ENCODE measurements at regions of chr2 and their contacts with region 1.

Region 1: GRCh38 chr2:143710196-143710595 is 581.0 kb downstream of the ARHGAP15 start:
- DNase-seq: no peak
- H3K4me3 ChIP-seq: no peak overlapping the region
- H3K27ac ChIP-seq: no peak overlapping the region
- H3K4me1 ChIP-seq: peaks cover 0 to 3% (median 0%) of the 10 kb centered on the region in 4 donors
- H3K27me3 ChIP-seq: no peaks in the 10 kb centered on the region
- CTCF ChIP-seq: no peak
- EP300 ChIP-seq: no peak
- POLR2A ChIP-seq: no peak

Region 2: DNA sequence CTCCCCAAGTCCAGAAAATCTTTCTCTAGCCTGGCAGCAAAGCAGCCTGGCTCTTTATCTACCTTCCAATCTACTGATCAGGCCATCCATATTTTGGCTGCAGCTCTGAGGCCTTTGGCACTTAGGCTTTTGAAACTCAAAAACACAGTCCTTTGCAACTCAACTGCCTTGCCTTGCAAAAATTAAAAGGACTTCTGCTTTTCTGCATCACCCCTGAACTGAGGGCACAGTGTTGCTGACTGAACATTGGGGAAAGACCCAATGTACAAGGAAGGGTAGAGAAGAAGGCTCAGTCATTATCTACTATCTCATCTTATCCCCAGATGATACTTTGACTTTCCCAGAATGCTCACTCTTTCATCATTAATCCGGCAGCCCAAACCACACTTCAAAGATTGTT is 44.5 kb after region 1 on chr2:
- in situ Hi-C with region 1: no loop called
- intact Hi-C with region 1: loop called (anchors 1 kb)
- DNase-seq: no peak
- H3K4me3 ChIP-seq: no peak overlapping the region
- H3K27ac ChIP-seq: no peak overlapping the region
- H3K4me1 ChIP-seq: no peaks in the 10 kb centered on the region
- H3K27me3 ChIP-seq: no peaks in the 10 kb centered on the region
- CTCF ChIP-seq: no peak
- EP300 ChIP-seq: no peak
- POLR2A ChIP-seq: no peak

Measured in transverse colon (tissue), 4 donors.